CD14-positive monocyte (primary cell): ENCODE measurements at regions of chr16 and their contacts with region 1.

Region 1: GRCh38 chr16:53249331-53249730 is 184.9 kb upstream of the RBL2 start:
- DNase-seq: no peak
- H3K4me3 ChIP-seq: no peak overlapping the region
- H3K4me3 Mint-ChIP-seq: no peak overlapping the region
- H3K27ac ChIP-seq: no peak overlapping the region
- H3K27ac Mint-ChIP-seq: no peak overlapping the region
- H3K4me1 ChIP-seq: no peaks in the 10 kb centered on the region
- H3K4me1 Mint-ChIP-seq: no peaks in the 10 kb centered on the region
- H3K27me3 ChIP-seq: no peaks in the 10 kb centered on the region
- H3K27me3 Mint-ChIP-seq: no peaks in the 10 kb centered on the region
- CTCF ChIP-seq: no peak

Region 2: DNA sequence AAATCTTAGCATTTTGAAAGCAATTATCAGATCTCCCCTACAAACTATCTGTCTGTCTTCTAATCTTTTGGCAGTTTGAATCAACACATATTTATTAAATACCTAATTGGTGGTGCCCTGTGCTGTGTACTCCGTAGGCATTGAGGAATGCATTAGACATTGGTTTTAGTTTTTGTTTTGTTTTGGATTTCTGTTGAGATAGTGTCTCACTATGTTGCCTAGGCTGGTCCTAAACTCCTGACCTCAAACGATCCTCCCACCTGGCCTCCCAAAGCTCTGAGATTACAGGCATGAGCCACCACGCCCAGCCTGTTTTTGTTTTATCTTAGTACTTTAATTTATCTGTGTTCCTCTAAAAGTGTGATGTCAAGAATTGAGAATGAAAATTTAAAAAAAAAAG is 60.1 kb after region 1 on chr16:
- intact Hi-C with region 1: loop called in 1 of 2 experiments (anchors 10 kb)
- DNase-seq: no peak
- H3K4me3 ChIP-seq: no peak overlapping the region
- H3K4me3 Mint-ChIP-seq: no peak overlapping the region
- H3K27ac ChIP-seq: peak overlapping the region in 1 of 2 donors; percentile 32
- H3K27ac Mint-ChIP-seq: peak overlapping the region in 2 of 7 donors; percentile 50 to 55
- H3K4me1 ChIP-seq: no peaks in the 10 kb centered on the region
- H3K4me1 Mint-ChIP-seq: no peaks in the 10 kb centered on the region
- H3K27me3 ChIP-seq: no peaks in the 10 kb centered on the region
- H3K27me3 Mint-ChIP-seq: no peaks in the 10 kb centered on the region
- CTCF ChIP-seq: no peak

Region 3: GRCh38 chr16:53457670-53458069 is 208.3 kb after region 1 on chr16:
- intact Hi-C with region 1: loop called in 1 of 2 experiments (anchors 10 kb)
- DNase-seq: no peak
- H3K4me3 ChIP-seq: no peak overlapping the region
- H3K4me3 Mint-ChIP-seq: no peak overlapping the region
- H3K27ac ChIP-seq: no peak overlapping the region
- H3K27ac Mint-ChIP-seq: peak overlapping the region in 2 of 7 donors; percentile 40 to 55
- H3K4me1 ChIP-seq: no peaks in the 10 kb centered on the region
- H3K4me1 Mint-ChIP-seq: no peaks in the 10 kb centered on the region
- H3K27me3 ChIP-seq: no peaks in the 10 kb centered on the region
- H3K27me3 Mint-ChIP-seq: peaks cover 0 to 2% (median 0%) of the 10 kb centered on the region in 3 donors
- CTCF ChIP-seq: no peak